Calu3 (cell line): ENCODE measurements at regions of chr10 and their contacts with region 1.

Region 1: DNA sequence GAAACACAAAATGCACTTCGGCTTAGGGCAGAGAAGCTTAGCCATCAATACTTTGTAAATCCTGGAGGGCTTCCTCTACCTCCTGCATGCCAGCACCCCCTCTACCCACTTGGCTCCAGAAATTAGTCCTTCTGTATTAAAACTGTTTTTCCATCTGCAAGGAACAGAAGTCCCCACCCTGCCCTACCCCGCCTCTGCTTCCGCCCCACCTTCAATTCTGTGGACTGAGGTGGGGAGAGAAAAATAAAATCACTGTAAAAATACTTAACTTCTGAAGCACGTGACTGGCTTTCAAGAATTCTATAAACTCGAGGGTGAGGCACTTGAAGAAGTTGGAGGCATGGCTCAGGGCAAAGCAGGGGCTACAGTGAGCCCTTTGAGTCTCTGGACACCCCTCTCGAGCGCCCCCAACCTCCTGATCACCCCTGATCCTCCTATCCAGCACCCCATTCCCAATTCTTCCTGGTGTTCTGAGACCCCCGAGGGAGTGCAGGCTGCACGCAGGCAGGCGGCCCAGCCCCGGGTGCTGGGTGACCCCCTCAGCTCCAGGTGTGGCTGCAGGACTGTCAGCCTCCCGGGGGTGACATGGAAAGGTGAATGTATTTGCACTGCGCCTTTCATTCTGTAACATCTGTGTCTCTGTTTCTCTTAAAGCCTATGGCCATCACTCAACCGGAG is 7.3 kb upstream of the KIAA1217 start:
- DNase-seq: no peak
- H3K4me3 Mint-ChIP-seq: no peak overlapping the region
- H3K27ac Mint-ChIP-seq: no peak overlapping the region
- H3K4me1 Mint-ChIP-seq: no peaks in the 10 kb centered on the region
- H3K27me3 Mint-ChIP-seq: no peaks in the 10 kb centered on the region
- CTCF ChIP-seq: no peak

Region 2: DNA sequence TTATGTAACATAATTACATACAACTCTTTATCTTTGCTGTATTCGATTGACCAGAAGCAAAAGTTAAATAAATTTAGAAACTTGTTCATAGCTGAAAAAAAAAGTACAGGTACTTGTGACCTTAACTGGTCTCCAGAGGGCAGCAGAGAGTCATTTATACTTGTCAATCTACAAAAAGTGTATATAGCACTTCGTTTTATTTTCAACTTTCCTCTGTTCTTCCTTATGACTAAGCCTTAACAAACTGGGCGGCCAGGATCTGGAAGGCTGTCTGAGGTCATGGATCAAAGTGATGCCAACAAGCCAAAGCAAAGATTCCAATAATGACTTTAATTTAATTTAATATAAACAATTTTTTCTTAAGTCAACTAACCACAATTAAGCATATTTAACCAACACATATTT is 886.8 kb before region 1 on chr10:
- CTCF ChIA-PET with region 1: no interaction called
- intact Hi-C with region 1: loop called (anchors 10 kb)
- DNase-seq: peak; percentile 67
- H3K4me3 Mint-ChIP-seq: no peak overlapping the region
- H3K27ac Mint-ChIP-seq: no peak overlapping the region
- H3K4me1 Mint-ChIP-seq: no peaks in the 10 kb centered on the region
- H3K27me3 Mint-ChIP-seq: no peaks in the 10 kb centered on the region
- CTCF ChIP-seq: peak; percentile 34

Region 3: GRCh38 chr10:23968301-23968700 is 233.3 kb before region 1 on chr10:
- CTCF ChIA-PET with region 1: no interaction called
- intact Hi-C with region 1: no loop called
- DNase-seq: no peak
- H3K4me3 Mint-ChIP-seq: no peak overlapping the region
- H3K27ac Mint-ChIP-seq: no peak overlapping the region
- H3K4me1 Mint-ChIP-seq: no peaks in the 10 kb centered on the region
- H3K27me3 Mint-ChIP-seq: no peaks in the 10 kb centered on the region
- CTCF ChIP-seq: no peak

Region 4: DNA sequence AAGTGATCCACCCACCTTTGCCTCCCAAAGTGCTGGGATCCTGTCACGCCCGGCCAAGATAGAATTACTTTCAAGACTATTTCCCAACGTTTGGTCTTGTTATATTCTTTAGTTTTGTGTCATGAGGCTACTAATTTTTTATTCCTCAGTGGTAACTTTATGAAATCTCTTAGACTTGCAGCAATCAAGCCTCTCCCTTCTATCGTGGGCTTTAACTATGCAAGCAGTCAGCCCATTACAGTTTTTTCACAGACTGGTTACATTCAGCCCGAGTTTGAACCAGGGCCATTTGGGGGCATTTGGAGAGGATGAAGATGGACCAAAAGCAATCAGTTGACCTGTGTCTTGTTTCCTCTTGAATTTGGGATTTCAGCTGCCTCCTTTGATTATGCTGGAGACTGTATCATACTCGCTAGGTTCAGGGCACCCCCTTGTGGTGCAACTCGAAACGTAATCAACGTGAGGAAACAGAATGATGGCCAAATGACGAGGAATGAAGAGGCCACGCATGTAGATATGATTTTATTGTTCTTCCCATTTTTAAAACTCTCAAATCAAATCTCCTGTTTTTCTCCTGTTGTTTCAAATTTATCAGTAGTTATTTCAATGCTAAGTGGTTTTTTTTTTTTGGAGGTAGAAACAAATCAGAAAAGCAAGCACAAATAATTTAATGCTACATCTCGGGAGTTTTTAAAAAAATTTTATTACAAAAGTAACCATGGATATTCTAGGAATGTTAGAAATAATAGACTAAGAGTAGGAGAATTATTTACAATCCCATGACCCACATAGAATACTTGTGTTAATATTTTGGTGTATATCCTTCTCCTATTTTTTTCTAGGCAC is 158.9 kb after region 1 on chr10:
- CTCF ChIA-PET with region 1: no interaction called
- intact Hi-C with region 1: loop called (anchors 2 kb)
- DNase-seq: peak; percentile 80
- H3K4me3 Mint-ChIP-seq: no peak overlapping the region
- H3K27ac Mint-ChIP-seq: no peak overlapping the region
- H3K4me1 Mint-ChIP-seq: peaks cover 8% of the 10 kb centered on the region
- H3K27me3 Mint-ChIP-seq: no peaks in the 10 kb centered on the region
- CTCF ChIP-seq: peak; percentile 49

Region 5: GRCh38 chr10:24518981-24519597 is 317.4 kb after region 1 on chr10:
- CTCF ChIA-PET with region 1: no interaction called
- intact Hi-C with region 1: loop called (anchors 5 kb)
- DNase-seq: peak; percentile 74
- H3K4me3 Mint-ChIP-seq: no peak overlapping the region
- H3K27ac Mint-ChIP-seq: no peak overlapping the region
- H3K4me1 Mint-ChIP-seq: no peaks in the 10 kb centered on the region
- H3K27me3 Mint-ChIP-seq: no peaks in the 10 kb centered on the region
- CTCF ChIP-seq: peak; percentile 56